ENCODE measurements at regions of chr6 and their contacts with region 1.

Region 1: GRCh38 chr6:16761471-16762267 is 409 bp upstream of the ATXN1 start:
- DNase-seq: peak; percentile 81
- H3K4me3 Mint-ChIP-seq: peak overlapping the region; percentile 97
- H3K27ac Mint-ChIP-seq: peak overlapping the region; percentile 99
- H3K4me1 Mint-ChIP-seq: peaks cover 77% of the 10 kb centered on the region
- H3K27me3 Mint-ChIP-seq: no peaks in the 10 kb centered on the region

Region 2: DNA sequence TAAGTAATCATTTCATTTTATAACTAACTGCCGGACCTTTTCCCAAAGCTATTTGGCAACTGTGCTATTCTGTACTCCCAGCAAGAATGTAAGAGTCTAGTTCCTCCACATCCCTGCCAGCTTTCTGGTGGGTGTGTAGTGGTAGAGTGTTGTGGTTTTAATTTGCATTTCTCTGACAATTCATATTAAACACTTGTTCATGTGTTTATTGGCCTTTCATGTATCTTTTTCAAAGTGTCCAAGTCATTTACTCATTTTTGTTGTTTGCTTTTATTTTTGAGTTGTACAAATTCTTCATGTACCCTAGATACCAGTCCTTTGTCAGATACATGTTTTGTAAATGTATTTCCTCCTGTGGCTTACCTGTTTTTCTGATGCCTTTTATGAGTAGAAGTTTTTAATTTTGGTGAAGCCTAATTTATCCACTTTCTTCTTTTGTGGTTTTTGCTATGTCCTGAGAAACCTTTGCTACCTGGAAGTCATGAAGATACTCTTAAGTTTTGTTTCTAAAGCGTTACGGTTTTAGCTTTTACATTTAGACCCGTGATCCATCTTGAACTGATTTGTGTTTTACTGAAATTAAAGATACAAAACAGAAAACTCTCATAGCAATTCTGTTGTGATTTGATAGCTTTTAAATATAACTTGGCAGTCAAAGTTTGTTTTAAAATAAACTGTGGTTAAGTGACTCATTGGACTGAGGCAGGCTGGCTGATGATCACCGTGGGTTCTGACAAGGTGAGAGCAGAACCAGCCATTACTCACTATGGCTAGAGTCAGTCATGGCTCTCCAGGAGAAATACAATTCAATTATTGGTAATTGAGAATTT is 624.8 kb before region 1 on chr6:
- intact Hi-C with region 1: loop called (anchors 5 kb)
- DNase-seq: no peak
- H3K4me3 Mint-ChIP-seq: peak overlapping the region; percentile 73
- H3K27ac Mint-ChIP-seq: peak overlapping the region; percentile 95
- H3K4me1 Mint-ChIP-seq: peaks cover 78% of the 10 kb centered on the region
- H3K27me3 Mint-ChIP-seq: no peaks in the 10 kb centered on the region

Region 3: DNA sequence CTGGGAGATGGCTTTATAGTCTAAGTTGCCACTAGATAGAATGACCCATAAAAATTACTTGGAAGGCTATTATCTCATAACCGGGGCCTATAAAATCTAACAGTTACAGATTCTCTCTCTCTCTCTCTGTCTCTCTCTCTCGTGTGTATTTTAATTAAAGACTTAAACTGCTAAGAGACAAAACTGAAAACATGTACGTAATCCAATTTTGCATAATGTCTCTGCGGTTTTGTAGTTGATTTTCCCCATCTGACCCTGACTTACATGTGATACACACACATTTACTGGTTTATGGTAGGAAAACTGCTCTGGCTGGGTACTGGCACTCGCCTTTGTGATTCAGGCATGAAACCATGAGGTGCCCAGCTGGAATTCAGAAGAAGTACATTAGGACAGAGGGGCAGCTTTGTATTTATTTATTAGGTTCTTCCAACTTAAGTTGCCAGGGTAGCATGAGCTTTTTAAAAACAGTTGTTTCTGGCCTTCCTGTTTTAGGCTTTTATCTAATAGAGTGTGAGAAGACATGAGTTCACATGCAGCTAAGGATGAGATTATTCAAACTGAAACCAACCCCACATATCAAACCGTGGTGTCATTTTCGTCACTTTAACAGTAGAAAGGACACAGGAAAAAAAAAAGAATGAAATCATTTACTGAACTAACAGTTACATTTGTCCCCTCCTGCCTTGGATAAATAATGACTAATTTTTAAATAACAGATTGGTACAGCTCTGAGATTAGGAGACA is 340.8 kb before region 1 on chr6:
- intact Hi-C with region 1: loop called (anchors 1 kb)
- DNase-seq: peak; percentile 47
- H3K4me3 Mint-ChIP-seq: peak overlapping the region; percentile 73
- H3K27ac Mint-ChIP-seq: peak overlapping the region; percentile 95
- H3K4me1 Mint-ChIP-seq: peaks cover 63% of the 10 kb centered on the region
- H3K27me3 Mint-ChIP-seq: no peaks in the 10 kb centered on the region

Region 4: DNA sequence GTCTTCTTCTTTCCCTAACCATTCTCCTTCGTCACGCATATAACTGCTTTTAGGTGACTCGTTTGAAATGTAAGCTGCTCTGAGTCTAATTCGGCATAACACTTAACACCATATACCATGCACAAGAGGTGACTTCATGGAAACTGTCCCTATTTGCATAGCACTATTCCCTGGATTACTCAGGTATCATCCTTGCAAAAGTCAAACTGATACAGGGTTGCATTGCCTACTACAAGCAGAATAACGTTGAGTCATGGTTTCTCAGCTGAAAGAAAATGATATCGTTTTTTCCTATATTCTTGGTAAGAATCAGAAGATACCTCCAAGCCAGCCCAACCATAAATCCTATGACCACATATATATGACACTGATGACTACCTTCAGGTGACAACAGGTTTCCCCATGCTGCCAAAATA is 227.9 kb before region 1 on chr6:
- intact Hi-C with region 1: loop called (anchors 1 kb)
- DNase-seq: no peak
- H3K4me3 Mint-ChIP-seq: no peak overlapping the region
- H3K27ac Mint-ChIP-seq: peak overlapping the region; percentile 83
- H3K4me1 Mint-ChIP-seq: peaks cover 45% of the 10 kb centered on the region
- H3K27me3 Mint-ChIP-seq: no peaks in the 10 kb centered on the region

Region 5: DNA sequence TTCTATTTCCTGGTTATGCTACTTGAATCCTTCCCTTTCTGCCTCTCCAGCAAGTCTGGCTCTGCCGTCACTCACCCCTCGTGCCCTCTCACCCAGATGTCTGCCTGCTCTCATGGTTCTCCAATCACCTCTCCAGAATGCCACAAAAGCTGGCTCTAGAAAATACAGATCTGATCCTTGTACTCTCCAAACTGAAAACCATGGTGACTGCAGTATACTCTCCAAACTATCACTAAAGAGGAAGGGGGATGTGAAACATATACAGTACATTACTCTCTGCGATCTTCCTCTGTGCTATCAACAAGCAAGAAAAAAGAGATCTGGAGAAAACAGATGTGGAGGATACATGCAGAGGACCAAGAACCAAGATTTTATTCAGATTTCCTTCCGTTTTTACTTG is 91.5 kb before region 1 on chr6:
- intact Hi-C with region 1: loop called (anchors 1 kb)
- DNase-seq: no peak
- H3K4me3 Mint-ChIP-seq: peak overlapping the region; percentile 51
- H3K27ac Mint-ChIP-seq: peak overlapping the region; percentile 94
- H3K4me1 Mint-ChIP-seq: peaks cover 84% of the 10 kb centered on the region
- H3K27me3 Mint-ChIP-seq: no peaks in the 10 kb centered on the region

Region 6: DNA sequence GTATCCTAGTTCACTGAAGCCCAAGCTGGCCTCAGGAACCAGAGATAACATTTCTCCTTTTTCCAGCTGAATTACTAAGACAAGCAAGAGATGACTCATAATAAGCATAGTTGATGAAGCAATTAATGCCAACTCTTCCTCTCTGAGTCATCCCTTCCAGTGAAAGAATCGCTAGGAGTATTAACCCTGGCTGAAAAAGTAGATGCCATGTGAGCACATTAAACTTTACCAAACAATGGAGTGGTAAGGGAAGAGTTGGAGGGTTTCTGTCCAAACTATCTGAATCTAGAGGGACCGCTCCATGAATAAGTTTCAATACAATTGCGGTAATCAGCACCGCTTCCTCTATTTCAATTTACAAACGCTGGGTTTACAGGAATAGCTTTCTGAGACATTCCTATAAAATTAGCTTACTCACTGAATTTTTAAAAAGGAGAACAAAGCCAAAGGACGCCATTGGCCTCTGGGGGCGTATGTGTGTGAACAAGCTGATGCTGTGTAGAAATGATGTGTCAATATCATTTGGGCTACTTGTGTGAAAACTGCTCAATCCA is 48.7 kb before region 1 on chr6:
- intact Hi-C with region 1: loop called (anchors 1 kb)
- DNase-seq: no peak
- H3K4me3 Mint-ChIP-seq: peak overlapping the region; percentile 60
- H3K27ac Mint-ChIP-seq: peak overlapping the region; percentile 88
- H3K4me1 Mint-ChIP-seq: peaks cover 65% of the 10 kb centered on the region
- H3K27me3 Mint-ChIP-seq: no peaks in the 10 kb centered on the region

Region 7: GRCh38 chr6:16956361-16956760 is 194.7 kb after region 1 on chr6:
- intact Hi-C with region 1: loop called (anchors 1 kb)
- DNase-seq: no peak
- H3K4me3 Mint-ChIP-seq: no peak overlapping the region
- H3K27ac Mint-ChIP-seq: peak overlapping the region; percentile 59
- H3K4me1 Mint-ChIP-seq: peaks cover 14% of the 10 kb centered on the region
- H3K27me3 Mint-ChIP-seq: peaks cover 3% of the 10 kb centered on the region